Panc1 (cell line): ENCODE measurements at regions of chr16 and their contacts with region 1.

Region 1: DNA sequence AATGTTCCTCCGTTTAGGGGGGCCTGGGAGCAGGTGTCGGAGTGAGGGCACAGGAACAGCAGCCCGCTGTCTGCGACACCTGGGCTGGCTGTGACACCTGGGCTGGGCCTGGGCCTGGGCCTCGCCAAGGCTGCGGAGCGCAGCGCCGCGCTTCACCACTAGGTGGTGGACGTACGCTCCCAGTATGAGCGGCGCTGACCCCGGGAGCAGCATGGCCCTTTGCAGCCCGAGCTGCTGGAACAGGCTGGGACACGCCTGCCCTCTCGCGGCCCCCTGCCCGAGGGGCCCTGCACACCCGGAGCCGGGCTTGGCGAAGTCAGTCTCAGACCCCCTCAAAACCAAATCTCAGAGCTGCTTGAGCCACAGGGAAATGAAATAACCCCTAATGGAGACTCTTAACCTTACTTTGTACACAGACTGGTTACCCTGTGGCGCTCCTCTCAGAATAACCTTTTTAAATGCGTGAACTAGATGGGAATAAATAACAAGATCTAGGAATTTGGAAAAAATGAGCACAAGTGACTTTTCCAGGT is 38.6 kb upstream of the FA2H start:
- DNase-seq: peak; percentile 30
- ATAC-seq: peak; percentile 100
- H3K4me3 ChIP-seq: no peak overlapping the region
- H3K27ac ChIP-seq: no peak overlapping the region
- H3K4me1 ChIP-seq: no peaks in the 10 kb centered on the region
- H3K27me3 ChIP-seq: no peaks in the 10 kb centered on the region
- CTCF ChIP-seq: peak; percentile 96

Region 2: DNA sequence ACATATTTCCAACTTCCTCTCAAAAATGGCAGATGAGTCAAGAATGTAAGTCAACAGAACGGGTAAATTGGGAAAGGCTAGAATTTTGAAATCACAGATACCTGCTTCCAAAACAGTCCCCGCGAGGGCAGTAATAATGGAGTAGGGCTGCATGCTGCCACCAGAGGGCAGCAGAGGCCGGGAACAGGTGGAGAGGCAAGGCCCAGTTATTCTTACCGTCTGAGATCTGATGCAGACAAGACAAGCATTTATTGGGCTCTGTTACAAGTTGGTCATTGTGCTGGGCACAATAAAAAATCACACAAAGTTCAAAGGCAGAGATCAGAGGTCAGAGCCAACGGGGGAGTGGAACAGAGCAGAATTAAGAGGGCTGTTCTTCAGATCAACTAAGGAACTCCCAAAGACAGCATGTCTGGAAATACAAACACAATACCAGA is 103.7 kb before region 1 on chr16:
- CTCF ChIA-PET with region 1: no interaction called
- POLR2A ChIA-PET with region 1: no interaction called
- in situ Hi-C with region 1: no loop called
- intact Hi-C with region 1: loop called (anchors 1 kb)
- DNase-seq: peak; percentile 61
- ATAC-seq: peak; percentile 96
- H3K4me3 ChIP-seq: no peak overlapping the region
- H3K27ac ChIP-seq: no peak overlapping the region
- H3K4me1 ChIP-seq: no peaks in the 10 kb centered on the region
- H3K27me3 ChIP-seq: no peaks in the 10 kb centered on the region
- CTCF ChIP-seq: peak; percentile 92

Region 3: DNA sequence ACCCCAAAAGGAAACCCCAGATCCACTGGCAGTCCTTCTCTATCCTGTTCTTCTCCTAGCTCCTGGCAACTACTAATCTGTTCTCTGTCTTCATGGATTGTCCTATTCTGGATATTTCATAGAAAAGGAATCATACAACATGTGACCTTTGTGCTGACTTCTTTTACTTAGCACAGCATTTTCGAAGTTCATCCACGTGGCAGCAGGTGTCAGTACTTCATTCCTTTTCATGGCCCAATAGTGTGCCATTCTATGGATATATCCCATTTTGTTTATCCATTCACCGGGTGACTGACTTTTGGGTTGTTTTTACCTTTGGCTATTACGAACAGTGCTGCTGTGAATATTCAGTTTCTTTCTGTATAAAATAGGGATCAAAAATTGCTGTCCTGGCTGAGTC is 28.1 kb before region 1 on chr16:
- CTCF ChIA-PET with region 1: interaction called, 11 read pairs
- POLR2A ChIA-PET with region 1: interaction called, 3 read pairs
- in situ Hi-C with region 1: no loop called
- intact Hi-C with region 1: no loop called
- DNase-seq: no peak
- ATAC-seq: no peak
- H3K4me3 ChIP-seq: no peak overlapping the region
- H3K27ac ChIP-seq: no peak overlapping the region
- H3K4me1 ChIP-seq: no peaks in the 10 kb centered on the region
- H3K27me3 ChIP-seq: no peaks in the 10 kb centered on the region
- CTCF ChIP-seq: no peak

Region 4: GRCh38 chr16:74862741-74863244 is 49.6 kb after region 1 on chr16:
- CTCF ChIA-PET with region 1: no interaction called
- POLR2A ChIA-PET with region 1: no interaction called
- in situ Hi-C with region 1: no loop called
- intact Hi-C with region 1: loop called (anchors 2 kb)
- DNase-seq: peak; percentile 22
- ATAC-seq: peak; percentile 71
- H3K4me3 ChIP-seq: no peak overlapping the region
- H3K27ac ChIP-seq: no peak overlapping the region
- H3K4me1 ChIP-seq: no peaks in the 10 kb centered on the region
- H3K27me3 ChIP-seq: no peaks in the 10 kb centered on the region
- CTCF ChIP-seq: peak; percentile 82

Region 5: GRCh38 chr16:75110637-75111513 is 297.7 kb after region 1 on chr16:
- CTCF ChIA-PET with region 1: no interaction called
- POLR2A ChIA-PET with region 1: no interaction called
- in situ Hi-C with region 1: no loop called
- intact Hi-C with region 1: loop called (anchors 10 kb)
- DNase-seq: peak; percentile 73
- ATAC-seq: peak; percentile 69
- H3K4me3 ChIP-seq: peak overlapping the region; percentile 26 to 53
- H3K27ac ChIP-seq: peak overlapping the region; percentile 86
- H3K4me1 ChIP-seq: peaks cover 54% of the 10 kb centered on the region
- H3K27me3 ChIP-seq: no peaks in the 10 kb centered on the region
- CTCF ChIP-seq: peak; percentile 82